PC-9 (cell line): ENCODE measurements at regions of chr7 and their contacts with region 1.

Region 1: GRCh38 chr7:65809259-65809981 is 63.5 kb upstream of the VKORC1L1 start:
- DNase-seq: no peak
- H3K4me3 ChIP-seq: no peak overlapping the region
- H3K27ac ChIP-seq: no peak overlapping the region
- H3K4me1 ChIP-seq: no peaks in the 10 kb centered on the region
- H3K27me3 ChIP-seq: no peaks in the 10 kb centered on the region
- CTCF ChIP-seq: no peak

Region 2: GRCh38 chr7:65832281-65832680 is 22.9 kb after region 1 on chr7:
- CTCF ChIA-PET with region 1: no interaction called
- POLR2A ChIA-PET with region 1: interaction called, 16 read pairs
- intact Hi-C with region 1: no loop called
- DNase-seq: peak in 1 of 2 experiments; percentile 17
- H3K4me3 ChIP-seq: no peak overlapping the region
- H3K27ac ChIP-seq: no peak overlapping the region
- H3K4me1 ChIP-seq: no peaks in the 10 kb centered on the region
- H3K27me3 ChIP-seq: no peaks in the 10 kb centered on the region
- CTCF ChIP-seq: no peak